Activated naive CD4-positive, alpha-beta T cell treated with anti-CD3 and anti-CD28 coated beads, Interleukin-2, amount 10 ng/mL, durations not matched to agents 7 days and 5 days (primary cell): ENCODE measurements at regions of chr19 and their contacts with region 1.

Region 1: DNA sequence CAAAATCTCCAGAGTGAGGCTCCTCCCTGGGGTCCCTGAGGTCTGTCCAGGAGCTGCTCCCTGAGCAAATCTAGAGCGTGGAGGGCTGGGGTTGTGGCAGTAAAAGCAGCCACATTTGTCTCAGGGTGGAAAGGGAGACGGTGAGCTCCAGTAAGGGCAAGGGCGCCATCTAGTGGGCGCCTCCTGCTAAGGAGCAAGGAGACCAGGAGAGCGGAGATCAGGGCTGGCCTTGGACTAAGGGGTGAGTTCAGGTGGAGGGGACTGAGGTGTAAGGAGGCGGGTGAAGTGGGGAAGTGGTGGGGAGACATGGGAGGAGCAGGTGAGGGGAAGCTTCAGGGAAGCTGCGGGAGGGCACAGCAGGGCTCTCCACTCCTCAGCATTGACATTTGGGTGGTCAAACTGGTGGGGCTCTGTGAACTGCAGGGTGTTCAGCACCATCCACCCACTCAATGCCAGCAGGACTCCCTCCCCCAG is 5.3 kb upstream of the CEACAM21 start:
- DNase-seq: peak; percentile 89
- H3K4me3 Mint-ChIP-seq: no peak overlapping the region
- H3K27ac Mint-ChIP-seq: peak overlapping the region; percentile 3
- H3K4me1 Mint-ChIP-seq: peaks cover 51% of the 10 kb centered on the region
- H3K27me3 Mint-ChIP-seq: no peaks in the 10 kb centered on the region

Region 2: DNA sequence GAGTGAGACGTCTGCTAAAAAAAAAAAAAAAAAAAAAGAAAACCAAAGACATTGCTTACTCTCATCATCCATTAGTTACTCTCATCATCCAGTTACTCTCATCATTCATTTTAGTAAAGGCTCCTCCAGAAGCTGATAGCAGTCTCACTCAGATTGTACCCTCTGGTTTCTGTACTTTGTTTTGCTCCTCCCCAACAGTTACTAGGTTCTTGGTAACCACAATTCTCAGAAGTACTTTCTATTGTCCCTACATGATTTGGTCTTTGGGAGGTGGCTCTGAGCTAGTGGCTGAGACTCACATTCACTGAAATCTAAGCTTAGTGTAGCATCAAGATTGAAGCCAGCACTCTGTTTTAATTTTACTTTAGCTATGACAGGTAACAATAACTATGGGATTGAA is 113.4 kb before region 1 on chr19:
- CTCF ChIA-PET with region 1: interaction called, 15 read pairs
- DNase-seq: peak; percentile 40
- H3K4me3 Mint-ChIP-seq: peak overlapping the region; percentile 8
- H3K27ac Mint-ChIP-seq: peak overlapping the region; percentile 56
- H3K4me1 Mint-ChIP-seq: peaks cover 41% of the 10 kb centered on the region
- H3K27me3 Mint-ChIP-seq: peaks cover 8% of the 10 kb centered on the region

Region 3: DNA sequence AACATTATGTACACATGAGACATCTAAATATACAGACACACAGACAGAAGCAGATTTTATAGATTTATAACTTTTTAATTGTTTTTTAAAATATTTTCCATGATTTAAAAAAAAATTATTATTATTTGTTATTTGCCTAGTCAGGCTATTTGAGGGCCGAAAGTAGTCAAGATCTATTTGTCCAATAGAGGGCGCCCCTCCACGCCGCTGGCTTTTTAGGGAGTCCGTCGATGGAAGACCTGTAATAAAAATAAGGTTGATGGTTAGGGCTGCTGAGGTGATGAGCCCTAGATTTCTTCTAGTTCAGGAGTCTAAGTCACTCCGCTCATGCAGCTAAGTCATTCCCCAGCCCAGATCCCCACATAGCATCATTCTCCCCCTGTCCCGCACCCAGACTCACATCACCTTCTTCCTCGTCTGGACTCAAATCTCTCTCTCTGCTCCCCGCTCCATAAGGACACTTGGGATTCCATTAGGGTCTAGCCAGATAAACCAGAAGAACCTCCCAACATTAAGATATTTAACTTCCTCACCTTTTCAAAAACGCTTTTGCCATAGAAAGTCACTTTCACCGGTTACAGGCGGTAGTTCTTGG is 28.6 kb before region 1 on chr19:
- CTCF ChIA-PET with region 1: interaction called, 376 read pairs
- DNase-seq: peak; percentile 86
- H3K4me3 Mint-ChIP-seq: peak overlapping the region; percentile 33
- H3K27ac Mint-ChIP-seq: peak overlapping the region; percentile 78
- H3K4me1 Mint-ChIP-seq: peaks cover 58% of the 10 kb centered on the region
- H3K27me3 Mint-ChIP-seq: peaks cover 5% of the 10 kb centered on the region

Region 4: GRCh38 chr19:41554907-41555306 is 15.8 kb before region 1 on chr19:
- CTCF ChIA-PET with region 1: interaction called, 376 read pairs
- DNase-seq: peak; percentile 66
- H3K4me3 Mint-ChIP-seq: peak overlapping the region; percentile 100
- H3K27ac Mint-ChIP-seq: peak overlapping the region; percentile 99
- H3K4me1 Mint-ChIP-seq: peaks cover 66% of the 10 kb centered on the region
- H3K27me3 Mint-ChIP-seq: no peaks in the 10 kb centered on the region

Region 5: GRCh38 chr19:41616792-41617621 is 46.3 kb after region 1 on chr19:
- CTCF ChIA-PET with region 1: no interaction called
- DNase-seq: peak; percentile 36
- H3K4me3 Mint-ChIP-seq: no peak overlapping the region
- H3K27ac Mint-ChIP-seq: no peak overlapping the region
- H3K4me1 Mint-ChIP-seq: no peaks in the 10 kb centered on the region
- H3K27me3 Mint-ChIP-seq: peaks cover 24% of the 10 kb centered on the region

Region 6: GRCh38 chr19:41668315-41668714 is 97.6 kb after region 1 on chr19:
- CTCF ChIA-PET with region 1: no interaction called
- DNase-seq: no peak
- H3K4me3 Mint-ChIP-seq: no peak overlapping the region
- H3K27ac Mint-ChIP-seq: no peak overlapping the region
- H3K4me1 Mint-ChIP-seq: no peaks in the 10 kb centered on the region
- H3K27me3 Mint-ChIP-seq: peaks cover 17% of the 10 kb centered on the region